PC-3 (cell line): ENCODE measurements at regions of chr9 and their contacts with region 1.

Region 1: DNA sequence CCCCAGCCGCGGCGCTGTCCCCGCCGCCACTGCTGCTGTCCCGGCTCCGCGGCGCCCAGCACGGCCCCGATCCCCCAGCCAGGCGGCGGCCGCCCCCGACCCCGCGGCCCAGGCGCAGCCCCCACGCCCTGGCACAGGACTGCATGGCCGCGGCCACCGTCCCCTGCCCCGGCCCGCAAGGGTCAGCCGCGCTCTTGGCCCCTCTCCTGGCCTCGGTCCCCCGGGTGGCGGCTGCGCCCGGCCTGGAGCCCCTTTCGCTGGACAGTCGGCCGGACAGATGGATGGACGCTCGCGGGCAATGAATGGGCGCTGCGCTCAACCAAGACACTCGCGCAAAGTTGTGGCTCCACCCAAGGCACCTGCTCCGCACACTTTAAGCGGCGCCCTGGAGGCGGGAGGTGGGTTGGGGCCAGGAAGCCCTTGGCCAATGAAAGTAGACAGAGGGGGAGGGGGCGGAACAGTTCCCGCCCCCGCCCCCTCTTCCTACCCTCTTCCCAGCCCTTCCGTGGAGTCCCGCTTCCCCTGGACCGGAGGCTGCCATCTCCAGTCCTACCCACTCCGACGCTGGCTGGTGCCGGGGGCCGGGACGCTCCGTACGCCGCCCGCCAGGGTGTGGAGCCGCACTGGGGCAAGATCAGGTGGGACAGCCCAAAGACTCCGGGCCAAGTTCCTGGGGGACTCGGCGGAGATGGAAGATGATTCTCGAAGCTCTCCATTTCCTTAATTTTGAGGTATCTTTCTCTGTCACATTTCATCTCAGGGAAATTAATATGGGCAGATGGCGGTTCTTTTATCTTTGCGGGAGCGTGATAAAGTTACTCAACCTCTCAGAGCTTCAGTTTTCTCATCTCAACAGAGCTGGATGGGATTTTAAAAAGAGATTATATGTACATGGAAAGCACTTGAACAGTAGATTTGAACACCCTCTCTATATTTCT is at the start of gene GLDC:
- DNase-seq: peak; percentile 87
- ATAC-seq: peak; percentile 96
- H3K4me3 ChIP-seq: peak within 1 kb of the TSS; percentile 88
- H3K27ac ChIP-seq: no peak within 1 kb of the TSS
- H3K4me1 ChIP-seq: 0 out of 2 replicates have a peak, but pooled peaks cover 6% of the 10 kb centered on the region
- H3K27me3 ChIP-seq: no peaks in the 10 kb centered on the region
- CTCF ChIP-seq: no peak
- total RNA-seq, gene GLDC: 5.4 and 8.1 TPM in 2 replicates

Region 2: GRCh38 chr9:6592231-6592630 is 53.4 kb before region 1 on chr9:
- CTCF ChIA-PET with region 1: no interaction called
- POLR2A ChIA-PET with region 1: interaction called, 27 read pairs
- intact Hi-C with region 1: no loop called
- DNase-seq: no peak
- ATAC-seq: no peak
- H3K4me3 ChIP-seq: no peak overlapping the region
- H3K27ac ChIP-seq: no peak overlapping the region
- H3K4me1 ChIP-seq: no peaks in the 10 kb centered on the region
- H3K27me3 ChIP-seq: no peaks in the 10 kb centered on the region
- CTCF ChIP-seq: no peak

Region 3: GRCh38 chr9:6681147-6681956 is 35.7 kb after region 1 on chr9:
- CTCF ChIA-PET with region 1: no interaction called
- POLR2A ChIA-PET with region 1: no interaction called
- intact Hi-C with region 1: loop called (anchors 2 kb)
- DNase-seq: peak; percentile 95
- ATAC-seq: peak; percentile 93
- H3K4me3 ChIP-seq: peak overlapping the region; percentile 82
- H3K27ac ChIP-seq: peak overlapping the region; percentile 93
- H3K4me1 ChIP-seq: peaks cover 12% of the 10 kb centered on the region
- H3K27me3 ChIP-seq: no peaks in the 10 kb centered on the region
- CTCF ChIP-seq: no peak